Activated CD4-positive, alpha-beta T cell treated with anti-CD3 and anti-CD28 coated beads, Interleukin-2, amount 10 ng/mL, durations not matched to agents 7 days and 5 days (primary cell): ENCODE measurements at regions of chr19 and their contacts with region 1.

Region 1: DNA sequence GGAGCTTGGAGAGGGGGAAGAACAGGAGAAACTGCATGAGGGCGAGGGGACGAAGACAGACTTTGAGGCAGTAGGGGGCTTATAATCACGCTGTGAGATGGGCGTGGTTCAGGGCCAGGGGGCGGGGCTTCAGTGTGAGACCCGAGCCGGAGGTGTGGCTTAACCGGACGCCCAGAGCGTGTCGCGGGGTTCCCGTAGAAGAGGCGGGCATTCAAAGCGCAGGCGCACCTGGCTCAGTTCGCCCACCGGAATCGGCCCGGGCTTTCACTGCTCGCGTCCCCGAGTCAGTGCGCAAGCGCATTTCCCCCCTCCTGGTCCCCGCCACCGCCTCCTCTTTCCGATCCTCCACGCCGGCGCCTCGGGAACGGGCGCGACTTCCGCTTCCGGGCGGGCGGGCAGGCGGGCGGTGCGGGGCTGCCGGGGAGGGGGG is 225 bp upstream of the ZNF865 start:
- DNase-seq: peak; percentile 99
- H3K4me3 Mint-ChIP-seq: peak overlapping the region; percentile 78
- H3K27ac Mint-ChIP-seq: peak overlapping the region; percentile 94
- H3K4me1 Mint-ChIP-seq: peaks cover 55% of the 10 kb centered on the region
- H3K27me3 Mint-ChIP-seq: no peaks in the 10 kb centered on the region

Region 2: DNA sequence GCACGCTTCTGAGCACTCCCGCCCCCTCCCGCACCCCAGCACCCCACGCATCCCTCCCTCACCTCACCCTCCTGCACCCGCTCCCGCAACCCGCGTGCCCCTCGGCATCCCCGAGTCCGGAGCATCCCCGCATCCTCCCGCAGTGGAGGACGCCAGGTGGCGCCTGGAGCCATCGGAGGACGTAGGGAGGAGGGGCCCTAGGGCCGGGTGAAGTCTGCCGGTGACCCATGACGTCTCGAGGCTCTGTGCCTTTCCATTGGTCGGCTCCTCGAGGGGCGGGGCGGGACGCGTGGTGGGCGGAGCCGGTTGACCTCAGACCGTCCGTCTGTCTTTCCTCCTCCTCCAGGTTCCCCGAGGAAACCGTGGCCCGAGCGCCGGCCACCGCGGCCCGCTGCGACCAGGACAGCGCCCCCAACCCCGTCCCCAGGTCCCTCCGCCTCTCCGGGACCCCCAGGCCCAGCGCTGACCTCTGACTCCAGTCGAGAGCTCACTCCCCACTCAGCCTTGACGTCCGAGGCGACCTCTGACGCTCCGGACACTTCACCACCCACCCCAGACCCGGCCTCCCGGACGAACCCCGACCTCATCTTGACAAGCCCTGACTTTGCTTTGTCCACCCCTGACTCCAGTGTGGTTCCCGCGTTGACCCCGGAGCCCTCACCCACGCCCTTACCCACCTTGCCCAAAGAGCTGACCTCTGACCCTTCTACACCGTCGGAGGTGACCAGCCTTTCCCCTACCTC is 88.2 kb before region 1 on chr19:
- CTCF ChIA-PET with region 1: interaction called, 13 read pairs
- POLR2A ChIA-PET with region 1: no interaction called
- DNase-seq: peak; percentile 90
- H3K4me3 Mint-ChIP-seq: peak overlapping the region; percentile 59
- H3K27ac Mint-ChIP-seq: peak overlapping the region; percentile 82
- H3K4me1 Mint-ChIP-seq: peaks cover 3% of the 10 kb centered on the region
- H3K27me3 Mint-ChIP-seq: no peaks in the 10 kb centered on the region

Region 3: GRCh38 chr19:55536951-55537740 is 68.1 kb before region 1 on chr19 and contains the start of gene SBK2:
- CTCF ChIA-PET with region 1: no interaction called
- POLR2A ChIA-PET with region 1: no interaction called
- DNase-seq: no peak
- H3K4me3 Mint-ChIP-seq: no peak within 1 kb of the TSS
- H3K27ac Mint-ChIP-seq: no peak within 1 kb of the TSS
- H3K4me1 Mint-ChIP-seq: no peaks in the 10 kb centered on the region
- H3K27me3 Mint-ChIP-seq: no peaks in the 10 kb centered on the region
- total RNA-seq, gene SBK2: not detected

Region 4: GRCh38 chr19:55549500-55550320 is 55.5 kb before region 1 on chr19:
- CTCF ChIA-PET with region 1: no interaction called
- POLR2A ChIA-PET with region 1: no interaction called
- DNase-seq: no peak
- H3K4me3 Mint-ChIP-seq: no peak overlapping the region
- H3K27ac Mint-ChIP-seq: no peak overlapping the region
- H3K4me1 Mint-ChIP-seq: no peaks in the 10 kb centered on the region
- H3K27me3 Mint-ChIP-seq: peaks cover 7% of the 10 kb centered on the region

Region 5: GRCh38 chr19:55624109-55625003 is 19.1 kb after region 1 on chr19 and contains the start of gene ZNF784:
- CTCF ChIA-PET with region 1: interaction called, 30 read pairs
- POLR2A ChIA-PET with region 1: interaction called, 3 read pairs
- DNase-seq: peak; percentile 92
- H3K4me3 Mint-ChIP-seq: peak within 1 kb of the TSS; percentile 91
- H3K27ac Mint-ChIP-seq: peak within 1 kb of the TSS; percentile 99
- H3K4me1 Mint-ChIP-seq: peaks cover 55% of the 10 kb centered on the region
- H3K27me3 Mint-ChIP-seq: peaks cover 12% of the 10 kb centered on the region
- total RNA-seq, gene ZNF784: 4.3 to 5.8 TPM

Region 6: DNA sequence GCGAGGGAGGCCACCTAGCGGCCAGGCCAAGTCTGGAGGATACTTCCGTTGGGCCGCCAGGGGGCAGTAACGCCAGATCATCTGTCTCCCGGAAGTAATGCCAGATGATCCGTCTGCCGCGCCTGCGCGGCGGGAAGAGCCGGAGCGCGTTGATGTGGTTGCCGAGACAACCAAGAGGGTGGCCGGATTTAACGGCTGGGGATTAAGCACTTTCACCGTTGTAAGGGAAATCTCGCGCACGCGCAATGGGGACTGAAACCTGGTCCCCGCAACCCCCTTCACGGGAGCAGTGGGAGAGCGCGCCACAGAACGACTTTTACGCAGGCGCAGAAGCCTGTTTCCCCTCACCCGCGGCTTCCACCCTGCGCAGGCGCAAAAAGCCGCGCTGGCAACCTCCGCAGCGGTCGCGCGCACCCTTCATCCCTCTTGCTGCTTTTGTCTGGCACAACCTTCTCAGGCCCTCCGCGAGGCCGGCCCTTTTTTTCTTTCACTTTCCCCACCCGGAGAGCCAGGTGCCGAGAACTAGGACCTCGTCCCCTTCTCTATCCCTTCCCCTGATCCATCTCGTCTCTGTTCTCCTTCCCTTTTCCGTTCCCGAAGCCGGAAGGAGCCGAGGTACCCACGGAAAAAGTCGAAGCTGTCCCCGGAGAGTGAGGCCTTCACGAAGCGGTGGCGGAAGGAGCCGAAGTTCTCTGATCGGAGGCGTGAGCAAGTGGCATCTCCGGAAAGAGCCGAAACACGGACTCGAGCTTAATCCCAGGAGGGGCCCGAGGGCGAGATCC is 48.7 kb after region 1 on chr19:
- CTCF ChIA-PET with region 1: interaction called, 13 read pairs
- POLR2A ChIA-PET with region 1: no interaction called
- DNase-seq: peak; percentile 100
- H3K4me3 Mint-ChIP-seq: peak overlapping the region; percentile 88
- H3K27ac Mint-ChIP-seq: peak overlapping the region; percentile 99
- H3K4me1 Mint-ChIP-seq: peaks cover 44% of the 10 kb centered on the region
- H3K27me3 Mint-ChIP-seq: no peaks in the 10 kb centered on the region